ENCODE measurements at regions of chr5 and their contacts with region 1.

Region 1: GRCh38 chr5:68287976-68288706 is 72.6 kb downstream of the PIK3R1 start:
- DNase-seq: peak; percentile 68 to 87
- ATAC-seq: peak; percentile 84 to 87 (median 86)
- H3K4me3 ChIP-seq: peak overlapping the region; percentile 77
- H3K27ac ChIP-seq: peak overlapping the region; percentile 95
- H3K4me1 ChIP-seq: peaks cover 57% of the 10 kb centered on the region
- H3K27me3 ChIP-seq: no peaks in the 10 kb centered on the region
- CTCF ChIP-seq: no peak

Region 2: GRCh38 chr5:68343421-68343826 is 55.3 kb after region 1 on chr5:
- intact Hi-C with region 1: loop called in 1 of 2 experiments (anchors 5 kb)
- DNase-seq: peak; percentile 44 to 57
- ATAC-seq: peak; percentile 92 to 98 (median 96)
- H3K4me3 ChIP-seq: no peak overlapping the region
- H3K27ac ChIP-seq: peak overlapping the region; percentile 64
- H3K4me1 ChIP-seq: peaks cover 12% of the 10 kb centered on the region
- H3K27me3 ChIP-seq: no peaks in the 10 kb centered on the region
- CTCF ChIP-seq: no peak

Region 3: GRCh38 chr5:68460147-68460798 is 172.1 kb after region 1 on chr5:
- intact Hi-C with region 1: loop called (anchors 2 to 5 kb)
- DNase-seq: no peak
- ATAC-seq: peak in 3 of 4 donors; percentile 57 to 74 (median 64)
- H3K4me3 ChIP-seq: no peak overlapping the region
- H3K27ac ChIP-seq: no peak overlapping the region
- H3K4me1 ChIP-seq: peaks cover 6% of the 10 kb centered on the region
- H3K27me3 ChIP-seq: no peaks in the 10 kb centered on the region
- CTCF ChIP-seq: peak; percentile 68

Region 4: GRCh38 chr5:68798877-68799843 is 511.0 kb after region 1 on chr5:
- intact Hi-C with region 1: loop called in 1 of 2 experiments (anchors 2 kb)
- DNase-seq: peak; percentile 55 to 69
- ATAC-seq: peak; percentile 76 to 84 (median 78)
- H3K4me3 ChIP-seq: no peak overlapping the region
- H3K27ac ChIP-seq: peak overlapping the region; percentile 91
- H3K4me1 ChIP-seq: peaks cover 43% of the 10 kb centered on the region
- H3K27me3 ChIP-seq: no peaks in the 10 kb centered on the region
- CTCF ChIP-seq: no peak

Region 5: DNA sequence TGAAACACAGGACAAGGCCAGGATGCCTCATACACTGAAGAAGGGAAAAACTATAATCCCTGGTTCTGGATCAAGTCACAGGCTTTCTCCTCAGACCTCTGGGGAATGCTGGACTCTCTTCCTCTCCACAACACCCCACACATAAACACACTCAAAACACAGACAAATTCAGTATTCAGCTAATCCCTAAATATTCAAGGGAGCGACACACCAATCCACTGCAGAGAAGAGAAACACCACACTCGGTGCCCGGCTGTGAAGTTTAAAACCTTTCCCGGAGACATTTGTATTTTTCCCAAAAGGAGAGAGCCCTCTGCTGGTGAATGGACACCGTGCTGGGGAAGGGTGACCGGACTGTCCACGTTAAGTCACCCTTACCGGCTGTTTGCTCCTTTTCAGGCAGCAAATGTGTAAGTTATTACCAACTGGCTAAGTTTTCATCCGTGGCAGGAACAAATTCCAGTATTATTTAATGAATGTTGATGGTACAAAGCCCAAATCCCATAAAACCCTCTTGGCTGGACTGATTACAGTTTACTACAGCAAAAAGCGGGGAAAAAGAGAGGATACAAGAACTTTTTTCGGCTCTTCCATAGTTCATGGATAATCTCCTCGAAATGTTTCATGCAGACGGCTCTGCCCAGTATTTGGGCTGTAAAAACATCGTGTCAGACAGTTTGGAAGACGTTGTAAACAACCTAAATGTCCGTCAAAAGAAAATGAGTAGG is 674.8 kb after region 1 on chr5:
- intact Hi-C with region 1: loop called (anchors 2 to 5 kb)
- DNase-seq: peak; percentile 48 to 67
- ATAC-seq: peak; percentile 89 to 98 (median 94)
- H3K4me3 ChIP-seq: no peak overlapping the region
- H3K27ac ChIP-seq: no peak overlapping the region
- H3K4me1 ChIP-seq: peaks cover 5% of the 10 kb centered on the region
- H3K27me3 ChIP-seq: no peaks in the 10 kb centered on the region
- CTCF ChIP-seq: peak; percentile 91

Measured in psoas muscle (tissue), 8 donors.